GM12878 (cell line): ENCODE measurements at regions of chr4 and their contacts with region 1.

Region 1: DNA sequence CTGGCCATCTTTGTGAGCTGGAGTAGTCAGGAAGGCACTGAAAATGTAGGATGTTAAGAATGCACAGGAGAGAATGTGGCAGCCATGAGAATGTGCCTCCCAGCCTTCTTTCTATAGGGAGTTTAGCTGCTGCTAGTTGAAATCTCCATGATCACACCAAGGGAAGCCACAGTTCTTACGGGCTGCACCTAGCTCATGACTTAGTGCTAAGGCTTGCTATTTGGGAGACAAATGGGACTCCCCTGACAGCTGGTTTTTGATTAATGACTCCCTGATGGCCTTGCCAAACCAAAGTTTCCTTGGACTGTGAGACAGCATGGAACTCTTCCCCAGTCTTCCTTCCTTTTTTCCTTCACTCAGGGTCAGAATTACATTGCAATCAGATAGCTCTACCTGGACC is 9.2 kb downstream of the CTSO start:
- DNase-seq: no peak
- ATAC-seq: no peak
- H3K4me3 ChIP-seq: no peak overlapping the region
- H3K27ac ChIP-seq: no peak overlapping the region
- H3K4me1 ChIP-seq: no peaks in the 10 kb centered on the region
- H3K27me3 ChIP-seq: no peaks in the 10 kb centered on the region
- CTCF ChIP-seq: no peak
- EP300 ChIP-seq: no peak
- POLR2A ChIP-seq: no peak
- RAD21 ChIP-seq: no peak

Region 2: DNA sequence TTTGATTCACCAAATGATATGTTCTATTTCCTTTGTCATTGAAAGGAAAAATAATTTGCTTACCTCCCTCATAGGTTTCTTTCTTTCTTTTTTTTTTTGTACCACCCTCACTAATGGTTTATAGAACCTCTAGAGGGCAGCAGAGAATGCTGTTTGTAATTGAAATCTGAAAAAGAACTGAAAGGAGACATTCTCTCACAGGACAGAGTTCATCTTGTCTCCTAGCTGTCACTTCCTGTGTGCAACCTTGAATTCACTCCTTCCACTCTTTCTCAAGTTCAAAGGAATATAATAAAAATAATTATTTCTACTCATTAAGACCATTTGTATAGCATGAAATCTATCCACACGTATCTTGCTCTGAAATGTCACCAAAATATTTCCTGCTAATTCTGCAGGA is 134.7 kb before region 1 on chr4:
- CTCF ChIA-PET with region 1: interaction called, 186 read pairs
- POLR2A ChIA-PET with region 1: no interaction called
- RAD21 ChIA-PET with region 1: interaction called, 8 read pairs
- SMC1A ChIA-PET with region 1: interaction called, 13 read pairs
- in situ Hi-C with region 1: no loop called
- intact Hi-C with region 1: no loop called
- DNase-seq: peak; percentile 55
- ATAC-seq: peak; percentile 99
- H3K4me3 ChIP-seq: no peak overlapping the region
- H3K27ac ChIP-seq: no peak overlapping the region
- H3K4me1 ChIP-seq: no peaks in the 10 kb centered on the region
- H3K27me3 ChIP-seq: no peaks in the 10 kb centered on the region
- CTCF ChIP-seq: peak; percentile 40 to 69 (median 54); a peak in 5 of 6 replicates
- EP300 ChIP-seq: no peak
- POLR2A ChIP-seq: no peak
- RAD21 ChIP-seq: peak; percentile 81